ENCODE measurements at regions of chr3 and their contacts with region 1.

Region 1: DNA sequence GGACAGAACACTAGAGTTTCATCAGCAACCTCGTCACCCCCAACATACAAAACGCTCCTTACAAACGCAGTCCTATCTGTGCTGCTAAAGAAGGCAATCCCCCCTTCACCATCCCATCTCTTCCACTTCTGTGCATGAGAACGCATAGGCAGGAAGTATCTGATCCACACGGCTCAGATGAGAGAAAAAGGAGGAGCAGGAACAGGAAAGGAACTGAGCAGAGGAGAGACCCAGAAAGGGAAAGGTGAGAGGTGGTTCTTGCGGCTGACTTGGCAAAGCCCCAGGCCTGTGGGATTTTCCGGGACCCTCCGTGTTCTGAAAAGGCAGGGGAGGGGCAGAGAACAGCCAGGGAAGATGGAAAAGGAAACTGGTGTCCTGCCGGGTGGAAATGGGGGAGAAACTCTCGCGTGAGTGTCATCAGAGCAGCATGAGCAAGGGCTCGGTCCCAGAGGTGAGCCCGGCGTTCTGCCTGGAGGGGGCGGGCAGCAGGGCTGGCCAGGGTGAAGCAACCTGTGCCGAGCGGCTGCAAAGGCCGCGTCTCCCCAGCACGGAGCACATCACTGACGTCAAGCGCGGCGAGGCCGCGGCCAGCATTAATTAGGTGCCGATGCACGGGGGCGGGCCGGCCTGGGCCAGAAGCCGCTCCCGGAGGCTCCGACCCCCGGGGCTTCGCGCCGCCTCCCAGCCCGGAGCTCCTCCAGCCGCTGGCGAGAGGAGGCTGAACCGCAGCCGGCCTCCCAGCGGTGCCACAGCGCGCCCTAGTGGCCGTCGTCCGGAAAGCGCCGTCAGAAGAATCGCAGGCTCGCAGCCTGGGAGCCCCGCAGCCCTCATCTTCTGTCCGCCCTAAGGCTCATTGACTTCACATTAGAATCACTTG is 35.8 kb downstream of the CPN2 start:
- ATAC-seq: peak; percentile 84 to 90 (median 87)
- H3K4me3 ChIP-seq: peak overlapping the region; percentile 0 to 21 (median 14)
- H3K27ac ChIP-seq: peak overlapping the region in 1 of 2 donors; percentile 33
- H3K4me1 ChIP-seq: peaks cover 24 to 26% of the 10 kb centered on the region in 2 donors

Region 2: DNA sequence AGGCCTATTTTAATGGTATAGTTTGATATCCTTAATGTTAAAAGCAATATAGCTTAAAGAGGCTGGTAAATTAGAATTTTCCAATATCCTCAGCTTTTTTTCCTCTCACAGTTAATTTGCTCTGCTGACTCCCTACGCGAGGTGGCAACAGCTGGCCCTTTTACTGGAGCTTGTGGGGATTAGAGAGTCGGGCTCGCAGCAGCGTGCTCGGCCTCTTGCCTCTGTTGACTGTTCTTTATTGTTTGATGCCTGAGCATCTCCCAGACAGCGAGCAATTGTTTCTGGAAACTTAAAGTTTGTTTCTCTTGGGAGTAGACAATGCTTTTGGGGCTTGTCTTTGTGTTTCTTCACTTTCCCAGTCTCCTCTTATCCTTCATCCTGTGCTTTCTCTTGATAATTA is 641.5 kb before region 1 on chr3:
- in situ Hi-C with region 1: loop called in 3 of 9 experiments (anchors 10 to 25 kb)
- ATAC-seq: peak in 5 of 8 experiments; percentile 77 to 100 (median 87)
- H3K4me3 ChIP-seq: no peak overlapping the region
- H3K27ac ChIP-seq: no peak overlapping the region
- H3K4me1 ChIP-seq: peaks cover 5 to 10% of the 10 kb centered on the region in 2 donors

Region 3: GRCh38 chr3:193780810-193781472 is 534.4 kb before region 1 on chr3:
- in situ Hi-C with region 1: loop called in 8 of 9 experiments (anchors 5 to 25 kb)
- ATAC-seq: peak; percentile 15 to 98 (median 58)
- H3K4me3 ChIP-seq: no peak overlapping the region
- H3K27ac ChIP-seq: no peak overlapping the region
- H3K4me1 ChIP-seq: peaks cover 61 to 83% of the 10 kb centered on the region in 2 donors

Region 4: GRCh38 chr3:193951859-193952258 is 363.5 kb before region 1 on chr3:
- in situ Hi-C with region 1: no loop called
- ATAC-seq: no peak
- H3K4me3 ChIP-seq: no peak overlapping the region
- H3K27ac ChIP-seq: no peak overlapping the region
- H3K4me1 ChIP-seq: no peaks in the 10 kb centered on the region

Region 5: DNA sequence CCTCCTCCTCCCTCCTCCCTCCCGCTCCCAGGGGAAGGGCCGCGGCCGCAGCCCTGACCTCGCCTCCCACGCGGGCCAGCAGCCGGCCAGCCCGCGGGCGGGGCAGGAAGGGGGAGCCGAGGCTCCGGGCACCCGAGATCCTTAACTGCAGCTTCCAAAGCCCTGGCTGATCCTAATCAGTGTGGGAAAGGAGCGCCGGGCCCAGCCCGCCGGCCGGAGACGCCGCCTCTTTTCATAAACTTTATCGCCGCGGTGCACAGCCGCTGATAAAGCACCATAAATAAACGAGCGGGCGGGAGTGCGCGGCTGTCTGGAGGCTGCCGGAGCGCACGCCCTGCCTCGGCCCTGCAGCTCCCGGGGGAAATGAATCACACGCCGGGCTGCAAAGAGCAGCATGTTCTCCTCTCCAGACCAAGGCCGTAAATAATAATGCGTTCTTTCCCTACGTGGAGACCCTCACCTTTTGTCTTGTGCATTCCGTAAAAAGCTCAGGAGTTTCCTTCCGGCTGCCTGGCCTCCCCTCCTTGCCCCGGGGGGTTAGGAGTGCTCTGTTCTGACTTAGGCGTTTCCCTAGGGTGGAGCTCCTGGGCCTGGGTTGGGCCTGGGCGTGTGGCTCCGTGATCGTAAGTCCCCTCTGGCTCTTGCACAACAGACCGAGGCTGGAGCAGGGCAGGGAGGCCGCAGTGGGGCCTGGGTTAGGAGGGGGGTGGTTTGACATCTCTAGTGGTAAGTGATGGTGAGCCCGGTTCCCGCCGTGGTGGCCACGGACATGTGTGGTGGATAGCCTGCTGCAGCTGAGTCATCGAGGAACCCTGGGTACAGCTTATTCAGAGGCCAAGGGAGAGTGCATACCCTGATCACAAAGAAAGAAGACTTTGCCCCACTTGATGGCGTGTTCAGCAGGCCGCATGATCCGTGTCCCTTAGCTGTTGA is 311.9 kb before region 1 on chr3:
- in situ Hi-C with region 1: loop called in 1 of 9 experiments (anchors 25 kb)
- ATAC-seq: peak; percentile 83 to 96 (median 92)
- H3K4me3 ChIP-seq: peak overlapping the region; percentile 6 to 34 (median 16)
- H3K27ac ChIP-seq: peak overlapping the region; percentile 72 to 75
- H3K4me1 ChIP-seq: peaks cover 32 to 38% of the 10 kb centered on the region in 2 donors

Region 6: GRCh38 chr3:194141415-194142155 is 173.7 kb before region 1 on chr3:
- in situ Hi-C with region 1: loop called in 4 of 9 experiments (anchors 10 to 25 kb)
- ATAC-seq: peak; percentile 24 to 77 (median 68)
- H3K4me3 ChIP-seq: peak overlapping the region; percentile 17 to 43 (median 30)
- H3K27ac ChIP-seq: peak overlapping the region; percentile 90 to 94
- H3K4me1 ChIP-seq: peaks cover 22 to 31% of the 10 kb centered on the region in 2 donors

Region 7: DNA sequence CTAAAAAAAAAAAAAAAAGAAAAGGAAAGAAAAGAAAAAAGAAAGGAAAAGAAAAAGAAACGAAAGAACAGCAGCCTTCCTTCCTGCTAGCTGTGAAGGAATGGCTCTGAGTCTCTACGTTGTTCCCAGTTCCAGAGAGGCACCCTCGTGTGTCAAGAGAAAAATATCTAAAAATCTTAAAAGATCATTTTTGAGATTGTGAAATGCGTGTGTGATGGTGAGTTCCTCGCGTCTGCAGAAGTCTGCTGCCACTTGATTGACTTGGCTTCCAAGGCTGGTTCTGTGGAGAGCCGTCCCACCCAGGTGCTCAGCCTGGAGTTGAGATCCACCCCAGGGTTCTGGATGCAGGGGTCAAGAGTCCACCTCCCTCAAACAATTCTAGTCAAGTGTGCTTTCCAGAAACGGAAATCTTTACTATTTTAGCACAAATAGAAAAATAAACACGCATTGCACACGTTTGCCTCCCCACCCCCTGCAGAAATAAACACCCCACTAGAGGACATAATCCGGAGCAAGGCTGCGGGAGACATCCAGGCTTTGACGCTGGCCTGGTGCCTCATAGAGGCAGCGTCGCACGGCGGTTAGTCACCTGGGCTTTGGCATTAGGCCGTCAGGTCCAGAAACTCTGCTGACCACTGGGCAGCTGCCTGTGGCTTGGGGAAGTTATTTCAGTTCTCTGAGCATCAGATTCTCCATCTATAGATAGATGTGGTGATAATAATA is 635.7 kb after region 1 on chr3:
- in situ Hi-C with region 1: no loop called
- ATAC-seq: no peak
- H3K4me3 ChIP-seq: no peak overlapping the region
- H3K27ac ChIP-seq: no peak overlapping the region
- H3K4me1 ChIP-seq: peaks cover 0 to 2% of the 10 kb centered on the region in 2 donors

Measured in motor neuron (in vitro differentiated cells).